ENCODE measurements at regions of chr10 and their contacts with region 1.

Region 1: DNA sequence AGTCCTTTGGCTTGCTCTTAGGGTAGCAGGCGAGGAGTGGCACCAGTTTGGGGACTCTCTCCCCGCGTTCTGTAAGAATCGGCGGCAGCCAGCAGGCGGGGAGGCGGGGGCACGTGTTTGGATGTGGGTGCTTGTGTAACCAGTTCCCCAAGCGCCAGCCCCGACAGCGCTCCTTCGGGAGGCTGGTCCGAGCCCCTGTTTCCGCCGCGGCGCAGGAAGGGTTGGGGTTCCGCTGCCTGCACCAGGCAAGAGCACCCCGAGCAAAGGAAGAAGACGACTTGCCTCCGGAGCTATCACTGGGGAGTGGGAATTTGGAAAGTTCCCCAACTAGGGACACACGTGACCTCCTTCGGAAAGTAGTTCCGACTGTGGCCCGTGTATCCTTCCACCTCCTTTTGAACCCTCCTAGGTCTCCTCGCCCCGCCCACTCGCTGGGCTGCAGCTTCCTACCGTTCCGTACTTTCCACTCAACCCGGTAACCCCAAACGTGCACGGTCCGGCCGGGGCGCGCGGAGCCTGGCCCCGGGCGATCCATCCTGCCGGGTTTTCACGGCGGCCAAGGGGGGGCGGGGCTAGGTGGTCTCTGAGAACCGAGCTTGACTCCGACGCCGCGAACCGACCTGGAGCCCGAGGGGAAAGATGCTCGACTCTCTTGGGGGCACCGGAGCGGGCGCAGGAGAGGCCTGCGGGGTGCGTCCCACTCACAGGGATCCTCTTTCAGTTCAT is 1.2 kb downstream of the KLLN start:
- H3K4me3 Mint-ChIP-seq: peak overlapping the region; percentile 99
- H3K27ac Mint-ChIP-seq: peak overlapping the region; percentile 96
- H3K4me1 Mint-ChIP-seq: peaks cover 28% of the 10 kb centered on the region
- H3K27me3 Mint-ChIP-seq: no peaks in the 10 kb centered on the region

Region 2: GRCh38 chr10:88064608-88065382 is 202.7 kb after region 1 on chr10:
- intact Hi-C with region 1: loop called (anchors 2 kb)
- H3K4me3 Mint-ChIP-seq: no peak overlapping the region
- H3K27ac Mint-ChIP-seq: peak overlapping the region; percentile 12
- H3K4me1 Mint-ChIP-seq: peaks cover 86% of the 10 kb centered on the region
- H3K27me3 Mint-ChIP-seq: no peaks in the 10 kb centered on the region

Region 3: GRCh38 chr10:88117869-88118632 is 255.9 kb after region 1 on chr10:
- intact Hi-C with region 1: loop called (anchors 5 kb)
- H3K4me3 Mint-ChIP-seq: no peak overlapping the region
- H3K27ac Mint-ChIP-seq: no peak overlapping the region
- H3K4me1 Mint-ChIP-seq: peaks cover 15% of the 10 kb centered on the region
- H3K27me3 Mint-ChIP-seq: peaks cover 1% of the 10 kb centered on the region

Region 4: DNA sequence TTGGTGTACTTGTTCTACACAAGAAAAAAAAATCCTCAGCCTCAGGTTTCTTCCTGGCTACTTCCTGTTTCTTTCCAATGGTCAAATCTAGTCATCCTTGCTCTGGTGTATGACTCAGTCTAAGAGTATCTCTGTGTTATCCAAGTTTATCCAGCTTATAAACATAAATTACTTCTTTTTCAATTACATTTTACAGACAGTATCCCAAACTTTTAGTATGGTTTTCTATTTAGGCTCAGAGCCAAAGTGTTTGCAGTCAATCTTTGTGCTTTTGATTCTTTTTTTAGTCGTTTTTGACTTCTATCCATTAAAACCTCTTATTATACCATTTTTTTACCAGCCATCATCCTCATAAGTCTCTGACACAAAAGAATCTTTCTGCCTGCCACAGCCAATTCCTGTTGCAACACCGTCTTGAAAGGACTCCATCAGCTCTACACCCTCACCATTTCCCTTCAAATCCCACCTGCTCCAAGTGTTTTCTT is 295.9 kb after region 1 on chr10:
- intact Hi-C with region 1: no loop called
- H3K4me3 Mint-ChIP-seq: no peak overlapping the region
- H3K27ac Mint-ChIP-seq: no peak overlapping the region
- H3K4me1 Mint-ChIP-seq: peaks cover 45% of the 10 kb centered on the region
- H3K27me3 Mint-ChIP-seq: no peaks in the 10 kb centered on the region

Region 5: DNA sequence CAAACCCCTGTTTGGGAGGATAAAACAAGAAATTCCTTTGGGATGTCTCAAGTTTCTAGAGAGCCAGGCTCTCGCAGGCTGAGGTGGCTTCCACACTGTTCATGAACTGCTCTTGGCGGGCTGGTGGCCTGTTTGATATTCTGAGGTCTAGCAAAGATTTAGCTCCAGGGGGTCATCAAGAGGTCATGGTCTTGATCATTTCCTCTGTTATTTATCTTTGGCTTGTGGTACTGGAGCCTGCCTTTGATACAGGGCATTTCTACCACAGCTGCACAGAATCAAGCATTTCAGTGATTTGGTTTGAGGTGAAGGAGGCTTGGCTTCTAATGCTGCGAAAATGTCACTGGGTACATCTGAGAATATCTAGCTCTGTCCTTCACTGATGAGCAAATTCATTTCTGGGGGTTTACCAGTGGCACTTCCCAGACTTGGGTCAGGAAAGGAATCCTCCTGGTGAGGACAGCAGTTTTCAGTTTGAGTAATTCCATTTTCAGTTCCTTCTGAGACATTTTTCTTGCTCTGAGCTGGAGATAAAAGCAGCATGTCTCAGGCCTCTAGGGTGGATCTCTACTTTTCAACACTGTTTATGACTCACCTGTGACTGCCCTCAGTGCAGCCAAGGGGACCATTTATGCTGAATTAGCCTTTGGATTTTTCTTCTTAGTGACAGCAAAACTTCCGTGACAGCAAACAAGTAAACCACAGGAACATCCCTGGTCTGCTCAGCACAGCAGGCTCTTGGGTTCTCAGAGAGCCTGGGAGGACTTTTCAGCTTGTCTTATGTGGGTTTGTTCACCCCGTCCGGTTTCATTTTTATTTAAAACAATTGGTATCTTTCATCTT is 409.0 kb after region 1 on chr10:
- intact Hi-C with region 1: loop called (anchors 2 kb)
- H3K4me3 Mint-ChIP-seq: peak overlapping the region; percentile 57
- H3K27ac Mint-ChIP-seq: peak overlapping the region; percentile 98
- H3K4me1 Mint-ChIP-seq: peaks cover 70% of the 10 kb centered on the region
- H3K27me3 Mint-ChIP-seq: no peaks in the 10 kb centered on the region

Region 6: DNA sequence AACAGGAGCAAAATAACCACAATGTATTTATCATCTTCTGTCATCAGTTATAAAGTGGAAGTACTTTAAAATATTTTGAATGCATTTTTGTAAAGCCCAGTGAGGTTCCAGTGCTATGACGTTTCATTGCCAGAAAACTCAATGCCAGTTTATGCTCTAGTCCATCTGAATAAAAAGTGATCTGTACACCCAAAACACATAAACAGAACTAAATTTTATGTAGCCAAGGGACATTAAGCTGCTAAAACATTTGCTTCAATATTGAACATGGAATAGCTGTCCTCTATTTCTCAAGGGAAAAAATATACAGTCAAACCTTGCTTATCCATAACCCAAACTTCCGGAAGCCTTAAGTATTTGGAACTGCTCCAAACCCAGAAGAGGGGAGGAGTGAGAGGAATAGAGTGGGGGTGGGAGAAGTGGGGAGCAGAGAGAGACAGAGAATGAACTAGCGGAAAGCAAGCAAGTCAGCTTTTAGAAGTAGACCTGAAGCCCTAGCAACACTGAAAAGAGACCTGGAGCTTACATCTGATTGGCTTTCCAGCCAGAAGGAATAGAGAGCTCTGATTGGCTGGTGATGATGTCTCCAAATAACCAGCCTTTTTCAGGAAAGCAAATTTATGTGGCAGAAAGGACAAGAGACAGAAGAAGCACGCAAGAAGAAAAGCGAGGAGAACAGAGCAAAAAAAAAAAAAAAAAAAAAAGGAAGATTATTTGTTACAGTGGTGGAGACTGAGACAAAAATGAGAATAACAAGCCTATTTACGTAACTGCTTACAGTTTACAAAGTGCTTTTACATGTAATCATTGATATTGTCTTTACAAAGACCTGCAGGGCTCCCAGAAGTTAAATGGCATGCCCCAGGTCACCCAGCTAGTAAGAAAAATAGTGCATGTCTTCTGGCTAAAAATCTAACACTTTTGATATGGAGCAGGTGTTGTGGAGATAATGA is 525.0 kb after region 1 on chr10:
- intact Hi-C with region 1: loop called (anchors 1 kb)
- H3K4me3 Mint-ChIP-seq: no peak overlapping the region
- H3K27ac Mint-ChIP-seq: no peak overlapping the region
- H3K4me1 Mint-ChIP-seq: peaks cover 6% of the 10 kb centered on the region
- H3K27me3 Mint-ChIP-seq: no peaks in the 10 kb centered on the region

Region 7: GRCh38 chr10:88553116-88553752 is 691.1 kb after region 1 on chr10:
- intact Hi-C with region 1: loop called (anchors 5 kb)
- H3K4me3 Mint-ChIP-seq: no peak overlapping the region
- H3K27ac Mint-ChIP-seq: no peak overlapping the region
- H3K4me1 Mint-ChIP-seq: peaks cover 16% of the 10 kb centered on the region
- H3K27me3 Mint-ChIP-seq: no peaks in the 10 kb centered on the region